Heart left ventricle (tissue), 16 donors: ENCODE measurements at regions of chr6 and their contacts with region 1.

Region 1: DNA sequence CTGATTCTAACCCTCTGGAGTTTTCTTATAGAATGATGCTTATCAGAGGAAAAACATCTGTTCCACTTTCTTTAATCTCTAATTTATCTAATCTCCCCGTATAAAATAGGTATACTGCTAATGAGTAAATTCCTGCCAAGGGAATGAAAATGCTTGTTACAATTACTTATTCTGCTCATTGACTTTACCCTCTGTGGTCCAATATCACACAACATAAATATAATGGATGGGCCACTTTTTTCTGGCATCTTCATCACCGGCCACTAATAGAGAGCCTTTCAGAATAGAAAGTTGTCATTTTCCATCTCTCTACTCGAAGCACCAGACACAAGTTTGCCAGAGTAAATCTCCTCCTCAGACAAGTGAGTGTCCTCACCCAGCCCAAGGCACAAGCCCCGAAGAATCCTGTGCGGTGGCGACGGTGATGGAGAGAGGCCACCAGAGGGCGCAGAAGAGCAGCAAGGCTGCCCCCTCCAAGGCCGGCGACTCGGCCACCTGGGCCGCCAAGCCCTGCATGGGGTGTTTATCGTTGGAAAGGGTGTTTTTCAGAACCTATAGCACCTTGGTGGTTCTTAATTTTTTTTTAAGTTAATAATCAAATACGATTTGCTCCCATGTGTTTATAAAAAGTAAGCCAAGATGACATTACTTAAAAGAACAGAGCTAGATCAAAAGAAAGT is 212.9 kb upstream of the ARID1B start:
- DNase-seq: peak; percentile 71 to 89 (median 79)
- ATAC-seq: peak; percentile 91 to 96 (median 94)
- H3K4me3 ChIP-seq: no peak overlapping the region
- H3K27ac ChIP-seq: no peak overlapping the region
- H3K4me1 ChIP-seq: peaks cover 0 to 12% (median 3%) of the 10 kb centered on the region in 12 donors
- H3K27me3 ChIP-seq: peaks cover 0 to 3% (median 0%) of the 10 kb centered on the region in 9 donors
- CTCF ChIP-seq: peak; percentile 92 to 99 (median 96)
- POLR2A ChIP-seq: no peak

Region 2: DNA sequence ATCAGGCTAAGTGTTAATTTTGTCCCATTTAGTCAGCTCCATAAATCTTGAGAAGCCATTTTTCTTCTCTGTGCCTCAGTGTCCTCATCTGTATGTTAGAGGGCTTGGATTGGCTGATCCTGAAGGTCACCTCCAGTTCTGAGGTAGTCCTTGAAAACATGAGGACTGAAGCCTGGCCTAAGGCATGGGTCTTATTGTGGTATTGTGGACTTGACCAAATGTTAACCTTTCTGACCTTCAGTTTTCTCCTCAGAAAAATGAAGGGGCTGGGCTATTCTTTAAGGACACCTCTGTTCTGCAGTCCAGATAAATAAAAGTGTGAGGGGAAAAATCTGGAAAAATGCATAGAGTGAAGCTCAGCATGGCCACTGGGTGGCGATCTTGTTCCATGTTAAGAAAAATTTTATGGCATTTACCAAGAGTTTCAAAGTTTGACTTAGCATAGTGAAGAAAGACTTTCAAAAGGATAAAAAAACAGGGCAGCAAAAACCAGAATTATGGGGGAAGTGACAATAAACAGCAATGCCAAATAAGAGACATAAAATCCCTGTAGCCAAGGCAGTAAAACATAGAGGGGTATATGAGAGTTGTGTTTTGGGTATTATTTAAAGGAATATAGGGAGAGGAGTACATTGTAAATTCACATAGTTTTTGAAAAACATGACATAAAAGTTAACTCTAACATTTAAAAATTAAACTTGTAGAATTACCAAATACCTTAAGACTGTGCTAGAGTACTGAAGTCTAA is 1236.8 kb before region 1 on chr6:
- intact Hi-C with region 1: loop called in 1 of 10 experiments (anchors 10 kb)
- DNase-seq: peak in 2 of 5 donors; percentile 30 to 45
- ATAC-seq: peak in 1 of 4 donors; percentile 69
- H3K4me3 ChIP-seq: no peak overlapping the region
- H3K27ac ChIP-seq: no peak overlapping the region
- H3K4me1 ChIP-seq: no peaks in the 10 kb centered on the region
- H3K27me3 ChIP-seq: no peaks in the 10 kb centered on the region
- CTCF ChIP-seq: peak; percentile 71 to 89 (median 80)
- POLR2A ChIP-seq: no peak

Region 3: DNA sequence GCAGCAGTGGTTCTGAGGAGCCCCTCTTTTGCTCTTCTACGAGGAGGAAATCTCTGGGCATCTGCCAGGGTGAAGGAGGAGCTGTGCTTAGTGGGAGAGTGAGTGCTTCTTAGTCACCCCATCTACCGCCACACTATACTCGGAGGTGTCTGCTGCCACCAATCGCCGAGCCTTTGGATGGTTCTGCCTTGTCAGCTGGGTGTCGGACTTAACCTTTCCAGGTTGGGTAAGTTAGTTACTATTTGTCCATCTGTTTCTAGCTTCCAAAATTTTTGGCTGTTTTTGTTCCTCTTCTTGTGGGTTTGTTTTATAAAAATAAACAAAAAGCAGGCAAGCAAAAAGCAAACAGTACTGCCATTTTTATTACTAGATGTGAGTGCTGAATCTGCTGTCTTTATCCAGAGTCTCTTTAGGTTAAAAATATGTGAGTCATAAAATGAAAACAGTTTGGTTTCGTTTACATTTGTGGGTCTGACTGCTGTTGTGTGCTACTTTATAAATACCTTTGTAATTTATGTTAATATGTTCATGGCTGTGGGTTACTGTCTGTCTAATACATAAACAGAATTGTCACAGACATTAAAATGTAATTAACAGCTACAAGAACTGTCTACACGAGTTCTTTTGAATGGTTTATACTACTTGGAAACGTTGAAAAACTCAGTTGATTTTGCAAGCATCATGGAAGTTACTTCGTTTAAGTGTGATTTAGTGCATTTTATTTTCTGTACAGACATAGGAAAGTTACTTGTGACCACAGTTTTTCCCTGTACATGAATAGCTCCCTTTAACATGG is 302.2 kb after region 1 on chr6:
- intact Hi-C with region 1: loop called in 2 of 10 experiments (anchors 10 kb)
- DNase-seq: peak in 3 of 5 donors; percentile 32 to 58 (median 33)
- ATAC-seq: peak; percentile 69 to 88 (median 81)
- H3K4me3 ChIP-seq: no peak overlapping the region
- H3K27ac ChIP-seq: no peak overlapping the region
- H3K4me1 ChIP-seq: peaks cover 4 to 72% (median 51%) of the 10 kb centered on the region in 12 donors
- H3K27me3 ChIP-seq: no peaks in the 10 kb centered on the region
- CTCF ChIP-seq: peak in 4 of 12 donors; percentile 6 to 34 (median 26)
- POLR2A ChIP-seq: no peak

Region 4: DNA sequence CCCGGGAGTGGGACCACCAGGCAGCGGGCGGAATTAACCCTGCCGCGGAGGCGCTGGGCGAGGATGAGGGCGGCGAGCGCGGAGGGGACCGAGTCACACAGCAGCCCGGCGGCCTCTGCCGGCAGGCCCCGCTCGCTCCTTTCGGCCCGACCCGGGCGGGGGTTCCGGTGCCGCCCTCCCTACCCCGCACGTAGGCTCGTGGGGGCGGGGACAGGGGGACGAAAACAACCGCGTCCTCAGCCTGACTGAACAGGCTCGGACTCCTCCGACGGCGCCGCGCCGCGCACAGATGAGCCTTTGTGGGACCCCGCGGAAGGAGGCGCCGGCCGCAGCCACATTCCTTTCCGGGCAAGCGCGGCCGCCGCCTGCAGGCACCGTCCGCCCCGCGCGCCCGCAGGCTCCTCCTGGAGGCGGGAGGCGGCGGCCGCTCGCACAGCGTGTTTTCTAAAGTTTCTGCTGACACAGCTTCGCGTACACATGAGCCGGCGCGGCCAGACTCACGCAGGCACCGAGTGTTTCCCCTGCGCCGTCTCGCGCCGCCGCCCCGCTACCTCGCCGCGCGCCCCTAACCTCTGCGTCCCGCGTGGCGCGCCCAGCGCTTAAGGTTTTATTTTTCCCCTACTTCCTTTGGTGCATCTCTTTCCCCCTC is 457.2 kb after region 1 on chr6:
- intact Hi-C with region 1: loop called in 7 of 10 experiments (anchors 2 to 10 kb)
- DNase-seq: peak; percentile 93 to 96 (median 93)
- ATAC-seq: peak; percentile 89 to 95 (median 94)
- H3K4me3 ChIP-seq: peak overlapping the region; percentile 53 to 96 (median 82)
- H3K27ac ChIP-seq: peak overlapping the region; percentile 95 to 100 (median 99)
- H3K4me1 ChIP-seq: peaks cover 0 to 55% (median 32%) of the 10 kb centered on the region in 12 donors
- H3K27me3 ChIP-seq: no peaks in the 10 kb centered on the region
- CTCF ChIP-seq: peak; percentile 11 to 72 (median 48)
- POLR2A ChIP-seq: peak in 1 of 2 donors; percentile 95

Region 5: DNA sequence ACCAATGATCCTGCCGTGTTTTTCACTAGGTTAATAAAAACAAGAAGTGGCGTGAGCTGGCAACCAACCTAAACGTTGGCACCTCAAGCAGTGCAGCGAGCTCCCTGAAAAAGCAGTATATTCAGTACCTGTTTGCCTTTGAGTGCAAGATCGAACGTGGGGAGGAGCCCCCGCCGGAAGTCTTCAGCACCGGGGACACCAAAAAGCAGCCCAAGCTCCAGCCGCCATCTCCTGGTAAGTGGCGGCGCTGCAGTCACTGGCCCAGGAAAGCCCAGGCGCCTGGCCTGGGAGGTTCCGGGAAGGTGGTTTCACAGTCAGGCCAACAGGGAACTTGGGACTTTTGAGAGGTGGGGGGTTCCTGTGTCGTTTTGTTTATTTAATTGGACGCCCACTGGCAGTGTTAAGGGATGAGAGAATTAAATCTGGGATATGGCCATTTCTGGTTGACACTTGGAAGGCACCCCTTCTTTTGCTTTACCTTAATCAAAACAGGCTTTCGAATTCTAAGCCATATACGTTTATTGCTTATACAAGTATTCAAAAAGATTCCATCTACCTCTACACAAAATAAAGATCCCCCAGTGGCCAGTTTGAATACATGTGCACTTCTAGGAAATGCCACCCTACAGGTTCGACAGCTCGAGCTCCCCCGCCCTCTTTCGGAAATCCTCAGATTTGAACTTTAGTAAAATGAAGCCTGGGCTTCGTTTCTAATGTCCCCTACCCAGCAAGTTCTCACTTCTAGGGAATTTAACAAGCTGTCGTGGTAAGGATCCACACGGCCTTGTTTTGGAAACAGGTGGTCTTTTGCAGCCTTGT is 620.1 kb after region 1 on chr6:
- intact Hi-C with region 1: loop called in 9 of 10 experiments (anchors 1 to 10 kb)
- DNase-seq: peak; percentile 58 to 79 (median 73)
- ATAC-seq: peak; percentile 23 to 81 (median 76)
- H3K4me3 ChIP-seq: peak overlapping the region in 2 of 12 donors; percentile 35 to 41
- H3K27ac ChIP-seq: no peak overlapping the region
- H3K4me1 ChIP-seq: peaks cover 0 to 38% (median 14%) of the 10 kb centered on the region in 12 donors
- H3K27me3 ChIP-seq: no peaks in the 10 kb centered on the region
- CTCF ChIP-seq: peak; percentile 69 to 95 (median 90)
- POLR2A ChIP-seq: no peak

Region 6: DNA sequence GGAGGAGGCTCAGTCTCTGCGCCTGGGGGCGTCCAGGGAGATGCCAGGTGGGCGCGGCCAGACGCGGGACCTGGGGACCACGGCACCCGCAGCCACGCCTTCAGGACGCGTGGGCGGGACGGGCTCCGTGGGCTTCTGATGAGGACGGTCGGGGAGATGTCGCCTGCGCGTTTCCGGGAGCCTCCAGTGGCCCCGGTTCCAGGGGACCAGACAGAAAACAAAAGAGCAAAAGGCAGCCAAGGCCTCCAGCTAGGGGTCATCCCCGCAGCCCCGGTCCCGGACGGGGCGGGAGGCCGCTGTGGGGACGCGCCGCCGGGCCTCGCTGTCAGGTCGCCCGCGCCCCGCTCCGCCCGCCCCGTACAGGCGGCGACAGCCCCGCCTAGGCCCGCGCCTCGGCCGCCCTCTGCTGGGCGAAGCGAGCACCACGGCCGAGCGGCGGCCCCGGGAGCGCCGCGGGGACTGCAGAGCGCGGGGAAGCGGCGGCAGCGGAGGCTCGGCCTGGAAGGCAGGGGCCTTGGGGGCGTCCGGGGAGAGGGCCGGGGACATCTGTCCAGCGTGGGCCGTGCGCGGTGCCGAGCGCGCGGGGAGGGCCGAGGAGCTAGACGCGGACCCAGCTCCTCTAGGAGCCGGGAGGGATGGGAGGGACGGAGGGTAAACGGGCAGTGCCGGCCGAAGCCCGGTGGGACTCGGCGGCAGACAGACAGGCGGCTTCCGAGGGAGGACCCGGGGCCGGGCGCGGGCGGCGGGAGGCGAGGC is 710.4 kb after region 1 on chr6:
- intact Hi-C with region 1: loop called in 2 of 10 experiments (anchors 10 kb)
- DNase-seq: peak; percentile 77 to 91 (median 82)
- ATAC-seq: peak; percentile 74 to 98 (median 94)
- H3K4me3 ChIP-seq: peak overlapping the region; percentile 28 to 80 (median 64)
- H3K27ac ChIP-seq: peak overlapping the region; percentile 51 to 90 (median 81)
- H3K4me1 ChIP-seq: peaks cover 0 to 28% (median 15%) of the 10 kb centered on the region in 12 donors
- H3K27me3 ChIP-seq: no peaks in the 10 kb centered on the region
- CTCF ChIP-seq: peak; percentile 27 to 98 (median 88)
- POLR2A ChIP-seq: peak in 1 of 2 donors; percentile 40